AG04449 (cell line): ENCODE measurements at regions of chr2 and their contacts with region 1.

Region 1: GRCh38 chr2:174341286-174341994 is 6.7 kb downstream of the SP9 start:
- DNase-seq: no peak
- H3K4me3 ChIP-seq: peak overlapping the region; percentile 13
- CTCF ChIP-seq: peak; percentile 96

Region 2: DNA sequence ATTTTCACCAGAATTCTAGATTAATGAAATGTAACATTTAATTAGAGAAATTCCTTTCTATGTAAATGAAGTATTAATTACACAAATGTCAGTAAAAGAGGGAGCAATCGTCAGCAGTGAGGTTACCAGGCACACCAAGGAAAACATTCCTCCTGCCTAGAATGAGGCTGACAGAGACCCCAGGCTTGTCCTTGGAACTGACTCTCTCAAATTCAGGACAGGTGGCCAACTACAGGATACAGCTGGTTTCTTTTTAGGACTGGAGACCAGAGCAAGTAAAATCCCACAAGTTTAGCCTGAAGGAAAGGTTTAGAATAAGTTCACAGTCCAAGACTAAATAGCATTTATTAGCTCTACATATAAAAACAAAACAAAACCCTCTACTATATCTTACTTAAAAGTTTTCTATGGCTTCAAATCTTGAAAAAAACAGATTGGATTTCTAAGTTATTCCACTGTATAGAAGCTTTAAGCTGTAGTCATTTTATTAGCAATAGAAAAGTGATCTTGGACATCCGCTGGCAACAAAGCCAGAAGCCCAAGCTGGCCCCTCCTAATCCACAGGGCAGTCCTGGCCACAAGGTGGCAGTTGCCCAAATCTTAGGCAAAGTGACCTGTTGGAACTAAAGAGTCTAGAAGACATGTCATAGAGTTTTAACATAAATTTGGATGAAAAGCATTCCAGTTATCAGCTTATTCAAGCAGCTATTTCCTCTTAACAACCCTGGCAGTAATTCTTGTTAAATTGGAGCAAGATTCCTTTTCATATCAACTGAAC is 457.2 kb before region 1 on chr2:
- CTCF ChIA-PET with region 1: interaction called, 17 read pairs
- POLR2A ChIA-PET with region 1: no interaction called
- DNase-seq: no peak
- H3K4me3 ChIP-seq: no peak overlapping the region
- CTCF ChIP-seq: peak; percentile 61

Region 3: GRCh38 chr2:174326161-174327020 is 15.0 kb before region 1 on chr2:
- CTCF ChIA-PET with region 1: interaction called, 16 read pairs
- POLR2A ChIA-PET with region 1: no interaction called
- DNase-seq: no peak
- H3K4me3 ChIP-seq: peak overlapping the region; percentile 64
- CTCF ChIP-seq: no peak